Astrocyte of the cerebellum (primary cell): ENCODE measurements at regions of chr19 and their contacts with region 1.

Region 1: GRCh38 chr19:32558607-32559228 is 22.3 kb upstream of the PDCD5 start:
- DNase-seq: no peak
- H3K4me3 ChIP-seq: no peak overlapping the region
- CTCF ChIP-seq: no peak

Region 2: GRCh38 chr19:32174386-32175113 is 384.2 kb before region 1 on chr19:
- in situ Hi-C with region 1: loop called (anchors 10 kb)
- DNase-seq: no peak
- H3K4me3 ChIP-seq: no peak overlapping the region
- CTCF ChIP-seq: no peak